ENCODE measurements at regions of chr10 and their contacts with region 1.

Region 1: GRCh38 chr10:15168781-15169554 is 475 bp upstream of the NMT2 start:
- DNase-seq: peak; percentile 98
- H3K4me3 Mint-ChIP-seq: peak overlapping the region; percentile 72
- H3K27ac Mint-ChIP-seq: peak overlapping the region; percentile 85
- H3K4me1 Mint-ChIP-seq: peaks cover 48% of the 10 kb centered on the region
- H3K27me3 Mint-ChIP-seq: no peaks in the 10 kb centered on the region

Region 2: GRCh38 chr10:14588084-14588937 is 580.7 kb before region 1 on chr10:
- CTCF ChIA-PET with region 1: no interaction called
- POLR2A ChIA-PET with region 1: no interaction called
- intact Hi-C with region 1: loop called (anchors 10 kb)
- DNase-seq: peak; percentile 82
- H3K4me3 Mint-ChIP-seq: peak overlapping the region; percentile 52
- H3K27ac Mint-ChIP-seq: peak overlapping the region; percentile 98
- H3K4me1 Mint-ChIP-seq: peaks cover 90% of the 10 kb centered on the region
- H3K27me3 Mint-ChIP-seq: no peaks in the 10 kb centered on the region

Region 3: GRCh38 chr10:14959276-14960057 is 209.5 kb before region 1 on chr10 and contains the start of gene MEIG1:
- CTCF ChIA-PET with region 1: no interaction called
- POLR2A ChIA-PET with region 1: no interaction called
- intact Hi-C with region 1: loop called (anchors 2 kb)
- DNase-seq: peak; percentile 95
- H3K4me3 Mint-ChIP-seq: peak within 1 kb of the TSS; percentile 88
- H3K27ac Mint-ChIP-seq: peak within 1 kb of the TSS; percentile 95
- H3K4me1 Mint-ChIP-seq: peaks cover 24% of the 10 kb centered on the region
- H3K27me3 Mint-ChIP-seq: no peaks in the 10 kb centered on the region
- total RNA-seq, gene MEIG1: 0.95 to 1.4 TPM

Region 4: GRCh38 chr10:15122477-15123030 is 46.4 kb before region 1 on chr10:
- CTCF ChIA-PET with region 1: interaction called, 18 read pairs
- POLR2A ChIA-PET with region 1: interaction called, 30 read pairs
- intact Hi-C with region 1: loop called (anchors 1 kb)
- DNase-seq: peak; percentile 45
- H3K4me3 Mint-ChIP-seq: peak overlapping the region; percentile 53
- H3K27ac Mint-ChIP-seq: peak overlapping the region; percentile 92
- H3K4me1 Mint-ChIP-seq: peaks cover 32% of the 10 kb centered on the region
- H3K27me3 Mint-ChIP-seq: no peaks in the 10 kb centered on the region

Region 5: DNA sequence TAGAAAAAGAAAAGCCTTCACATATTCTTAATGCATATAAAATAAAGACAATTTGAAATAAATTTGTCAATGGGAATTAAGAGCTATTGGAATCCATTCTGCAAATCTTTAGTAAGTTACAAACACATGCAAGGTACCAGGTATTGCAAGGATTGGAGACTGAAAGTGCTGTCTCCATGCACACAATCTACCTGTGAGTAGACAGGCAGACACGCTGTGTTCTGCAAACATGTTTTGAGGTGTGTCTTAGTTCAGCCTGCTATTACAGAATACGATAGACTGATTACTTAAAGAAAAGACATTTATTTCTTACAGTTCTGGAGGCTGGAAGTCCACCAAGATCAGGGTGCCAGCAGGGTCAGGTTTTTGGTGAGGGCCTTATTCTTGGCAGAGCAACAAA is 10.5 kb before region 1 on chr10:
- CTCF ChIA-PET with region 1: no interaction called
- POLR2A ChIA-PET with region 1: no interaction called
- intact Hi-C with region 1: no loop called
- DNase-seq: no peak
- H3K4me3 Mint-ChIP-seq: no peak overlapping the region
- H3K27ac Mint-ChIP-seq: no peak overlapping the region
- H3K4me1 Mint-ChIP-seq: peaks cover 23% of the 10 kb centered on the region
- H3K27me3 Mint-ChIP-seq: no peaks in the 10 kb centered on the region

Region 6: DNA sequence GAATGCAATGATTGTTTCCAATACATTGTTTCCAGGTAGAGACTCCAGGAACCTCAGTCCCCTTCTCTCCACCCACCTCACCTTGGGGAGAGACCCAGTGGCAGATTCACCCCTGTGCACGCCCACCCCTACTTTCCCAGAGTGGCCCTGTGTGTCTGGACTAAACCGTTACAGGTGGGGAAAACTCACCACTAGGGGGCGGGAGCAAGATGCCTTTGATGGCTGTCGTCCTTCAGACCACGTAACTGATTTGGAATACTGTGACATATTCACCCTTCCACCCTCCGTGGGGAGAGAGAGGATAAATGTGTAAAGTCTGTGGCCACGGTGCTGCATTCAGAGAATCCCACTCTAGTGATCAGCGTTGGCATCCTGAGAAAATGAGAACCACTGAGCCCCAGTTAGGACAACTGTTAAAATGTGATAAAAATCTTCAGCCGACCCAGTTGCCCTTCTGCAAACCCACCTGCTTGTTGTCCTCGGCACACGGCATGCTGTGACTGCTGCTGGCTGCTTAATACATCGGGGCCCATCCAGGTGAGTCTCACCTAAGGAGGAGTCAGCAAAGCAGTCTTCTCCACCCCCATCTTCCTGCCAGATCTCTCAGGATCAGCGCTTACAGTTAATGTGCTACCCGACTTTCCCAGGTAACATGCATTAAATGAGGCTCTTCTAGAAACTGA is 41.0 kb after region 1 on chr10:
- CTCF ChIA-PET with region 1: interaction called, 6 read pairs
- POLR2A ChIA-PET with region 1: interaction called, 3 read pairs
- intact Hi-C with region 1: loop called (anchors 1 kb)
- DNase-seq: peak; percentile 86
- H3K4me3 Mint-ChIP-seq: no peak overlapping the region
- H3K27ac Mint-ChIP-seq: no peak overlapping the region
- H3K4me1 Mint-ChIP-seq: peaks cover 49% of the 10 kb centered on the region
- H3K27me3 Mint-ChIP-seq: no peaks in the 10 kb centered on the region

Region 7: DNA sequence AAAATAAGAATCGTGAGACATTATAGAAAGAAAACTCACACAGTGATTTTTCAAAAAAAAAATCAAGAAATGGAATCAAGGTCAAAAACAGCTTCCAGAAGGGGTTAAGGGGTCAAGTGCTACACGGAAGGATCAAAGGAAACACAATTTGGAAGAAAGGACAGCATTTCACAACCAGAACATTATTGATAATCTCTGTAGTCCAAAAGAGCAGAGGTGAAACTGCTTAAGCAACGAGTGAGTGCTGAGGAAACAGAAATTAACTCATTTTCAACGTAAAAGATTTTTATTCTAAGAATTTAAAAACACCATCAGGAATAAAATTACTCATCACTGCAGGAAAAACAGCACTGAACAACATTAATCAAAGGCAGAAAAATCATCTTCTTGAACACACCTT is 667.8 kb after region 1 on chr10:
- CTCF ChIA-PET with region 1: no interaction called
- POLR2A ChIA-PET with region 1: no interaction called
- intact Hi-C with region 1: loop called (anchors 5 kb)
- DNase-seq: no peak
- H3K4me3 Mint-ChIP-seq: no peak overlapping the region
- H3K27ac Mint-ChIP-seq: no peak overlapping the region
- H3K4me1 Mint-ChIP-seq: peaks cover 10% of the 10 kb centered on the region
- H3K27me3 Mint-ChIP-seq: no peaks in the 10 kb centered on the region